ENCODE measurements at regions of chr3 and their contacts with region 1.

Region 1: DNA sequence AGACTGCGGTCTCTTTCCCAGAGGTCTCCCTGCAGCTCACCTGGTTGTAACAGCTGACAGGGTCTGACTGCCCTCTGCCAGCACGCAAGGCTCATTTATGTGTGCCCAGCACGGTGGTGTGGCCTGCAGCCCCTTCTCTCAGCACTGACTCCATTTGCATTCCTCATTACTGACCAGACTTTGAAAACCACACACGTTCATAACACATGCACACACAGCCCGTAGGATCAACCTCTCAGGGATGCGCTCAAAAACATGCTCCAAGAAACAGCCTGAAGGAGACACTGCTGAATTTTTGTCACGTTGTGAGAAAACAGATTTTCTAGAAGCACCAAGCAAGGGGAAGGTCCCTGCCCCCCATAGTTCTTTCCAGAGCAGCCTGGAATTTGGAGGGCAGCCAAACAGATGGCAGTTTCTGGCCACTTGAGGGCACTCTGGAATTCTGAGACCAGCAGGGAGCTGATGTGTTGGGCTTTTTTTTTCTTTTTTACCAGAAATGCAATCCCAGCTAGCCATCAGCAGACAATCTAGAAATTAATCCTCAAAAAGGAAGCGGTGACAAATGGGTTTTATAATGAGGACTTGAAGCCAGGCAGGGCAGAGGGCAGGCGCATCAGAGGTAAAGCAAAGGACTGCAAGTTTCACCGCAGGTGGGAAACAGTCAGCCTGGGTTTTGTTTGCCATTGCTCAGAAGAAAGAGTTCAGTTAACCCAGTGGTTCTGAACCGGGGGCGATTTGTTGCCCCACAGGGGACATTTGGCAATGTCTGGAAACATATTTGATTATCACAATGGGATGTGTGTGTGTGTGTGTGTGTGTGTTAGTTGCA is 170.5 kb upstream of the PROK2 start:
- DNase-seq: peak; percentile 34
- ATAC-seq: peak; percentile 85
- H3K4me3 ChIP-seq: no peak overlapping the region
- H3K27ac ChIP-seq: no peak overlapping the region
- H3K4me1 ChIP-seq: no peaks in the 10 kb centered on the region
- H3K27me3 ChIP-seq: peaks cover 0 to 4% of the 10 kb centered on the region in 2 experiments; a peak in 2 of 5 replicates
- CTCF ChIP-seq: peak; percentile 75
- EP300 ChIP-seq: no peak
- POLR2A ChIP-seq: no peak
- RAD21 ChIP-seq: peak; percentile 22; the same call in 1 of the 2 replicates

Region 2: GRCh38 chr3:71244826-71245488 is 710.5 kb before region 1 on chr3:
- CTCF ChIA-PET with region 1: no interaction called
- POLR2A ChIA-PET with region 1: no interaction called
- in situ Hi-C with region 1: no loop called
- intact Hi-C with region 1: no loop called
- DNase-seq: peak; percentile 82
- ATAC-seq: peak; percentile 77
- H3K4me3 ChIP-seq: peak overlapping the region; percentile 37 to 44 (median 38); a peak in 5 of 6 replicates
- H3K27ac ChIP-seq: peak overlapping the region; percentile 82
- H3K4me1 ChIP-seq: peaks cover 81% of the 10 kb centered on the region
- H3K27me3 ChIP-seq: no peaks in the 10 kb centered on the region
- CTCF ChIP-seq: no peak
- EP300 ChIP-seq: peak in 1 of 2 experiments; percentile 91; a peak in 2 of 4 replicates
- POLR2A ChIP-seq: no peak
- RAD21 ChIP-seq: no peak

Region 3: GRCh38 chr3:71875461-71875947 is 80.0 kb before region 1 on chr3:
- CTCF ChIA-PET with region 1: no interaction called
- POLR2A ChIA-PET with region 1: no interaction called
- in situ Hi-C with region 1: no loop called
- intact Hi-C with region 1: loop called (anchors 10 kb)
- DNase-seq: peak; percentile 43
- ATAC-seq: peak; percentile 99
- H3K4me3 ChIP-seq: no peak overlapping the region
- H3K27ac ChIP-seq: no peak overlapping the region
- H3K4me1 ChIP-seq: no peaks in the 10 kb centered on the region
- H3K27me3 ChIP-seq: no peaks in the 10 kb centered on the region
- CTCF ChIP-seq: peak; percentile 91
- EP300 ChIP-seq: no peak
- POLR2A ChIP-seq: no peak
- RAD21 ChIP-seq: peak; percentile 68

Region 4: DNA sequence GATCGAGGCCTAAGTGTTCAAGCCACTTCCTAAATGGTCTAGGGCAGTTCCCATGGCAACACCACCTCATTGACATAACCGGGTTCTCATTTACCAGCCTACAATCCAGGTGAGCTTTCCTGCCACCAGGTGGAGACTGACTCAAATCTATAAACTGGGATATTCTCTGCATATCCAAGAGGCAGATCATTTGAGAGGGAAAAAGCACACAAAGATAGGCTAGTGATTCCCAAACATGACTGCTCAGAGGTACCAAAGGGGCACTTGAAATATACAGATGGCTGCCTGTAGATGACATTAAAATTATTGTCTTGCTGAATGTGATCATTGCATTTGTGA is 29.2 kb before region 1 on chr3:
- CTCF ChIA-PET with region 1: no interaction called
- POLR2A ChIA-PET with region 1: no interaction called
- in situ Hi-C with region 1: no loop called
- intact Hi-C with region 1: no loop called
- DNase-seq: peak; percentile 39
- ATAC-seq: peak; percentile 71
- H3K4me3 ChIP-seq: no peak overlapping the region
- H3K27ac ChIP-seq: no peak overlapping the region
- H3K4me1 ChIP-seq: no peaks in the 10 kb centered on the region
- H3K27me3 ChIP-seq: peaks cover 0 to 4% of the 10 kb centered on the region in 2 experiments; a peak in 2 of 5 replicates
- CTCF ChIP-seq: peak; percentile 58
- EP300 ChIP-seq: no peak
- POLR2A ChIP-seq: no peak
- RAD21 ChIP-seq: no peak

Region 5: GRCh38 chr3:72265256-72266015 is 310.0 kb after region 1 on chr3:
- CTCF ChIA-PET with region 1: no interaction called
- POLR2A ChIA-PET with region 1: no interaction called
- in situ Hi-C with region 1: loop called (anchors 5 kb)
- intact Hi-C with region 1: no loop called
- DNase-seq: no peak
- ATAC-seq: no peak; the same call in 2 of the 3 replicates
- H3K4me3 ChIP-seq: no peak overlapping the region
- H3K27ac ChIP-seq: no peak overlapping the region
- H3K4me1 ChIP-seq: peaks cover 20% of the 10 kb centered on the region
- H3K27me3 ChIP-seq: no peaks in the 10 kb centered on the region; a peak in 1 of 5 replicates
- CTCF ChIP-seq: peak; percentile 44
- EP300 ChIP-seq: no peak
- POLR2A ChIP-seq: no peak
- RAD21 ChIP-seq: no peak

Region 6: DNA sequence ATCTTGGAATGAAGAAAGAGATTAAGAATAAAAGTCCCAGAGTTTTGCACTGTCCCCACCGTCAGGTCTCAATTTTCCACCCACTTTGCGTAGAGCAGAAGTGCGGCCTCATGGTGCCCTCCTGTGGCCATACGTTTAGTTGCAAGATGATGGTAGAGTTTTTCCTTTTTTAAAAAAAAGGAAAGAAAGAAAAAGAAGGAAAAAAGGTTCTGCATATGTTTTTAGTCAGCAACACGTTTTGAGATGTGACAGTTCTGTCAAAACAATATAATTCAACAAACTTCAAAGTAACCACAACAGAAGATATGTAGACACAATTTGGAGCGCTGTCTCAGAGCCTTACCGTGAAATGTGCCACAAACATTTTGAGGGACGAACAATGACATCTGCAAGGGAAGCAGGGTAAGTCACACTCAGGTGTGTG is 1130.6 kb after region 1 on chr3:
- CTCF ChIA-PET with region 1: no interaction called
- POLR2A ChIA-PET with region 1: no interaction called
- in situ Hi-C with region 1: no loop called
- intact Hi-C with region 1: loop called (anchors 10 kb)
- DNase-seq: peak; percentile 34
- ATAC-seq: peak; percentile 68
- H3K4me3 ChIP-seq: no peak overlapping the region
- H3K27ac ChIP-seq: no peak overlapping the region
- H3K4me1 ChIP-seq: no peaks in the 10 kb centered on the region
- H3K27me3 ChIP-seq: no peaks in the 10 kb centered on the region; a peak in 1 of 5 replicates
- CTCF ChIP-seq: peak; percentile 81
- EP300 ChIP-seq: no peak
- POLR2A ChIP-seq: no peak
- RAD21 ChIP-seq: peak; percentile 81

Measured in HepG2 (cell line).